T-cell (primary cell): ENCODE measurements at regions of chr13 and their contacts with region 1.

Region 1: GRCh38 chr13:48769107-48769704 is 115.5 kb downstream of the CYSLTR2 start:
- DNase-seq: peak; percentile 28 to 91 (median 73)
- ATAC-seq: peak; percentile 96 to 100 (median 99)
- H3K4me3 ChIP-seq: no peak overlapping the region
- H3K4me3 Mint-ChIP-seq: no peak overlapping the region
- H3K27ac ChIP-seq: no peak overlapping the region
- H3K27ac Mint-ChIP-seq: no peak overlapping the region
- H3K4me1 ChIP-seq: no peaks in the 10 kb centered on the region
- H3K4me1 Mint-ChIP-seq: peaks cover 4 to 6% (median 5%) of the 10 kb centered on the region in 3 donors
- H3K27me3 ChIP-seq: no peaks in the 10 kb centered on the region
- H3K27me3 Mint-ChIP-seq: peaks cover 4 to 6% of the 10 kb centered on the region in 2 donors

Region 2: GRCh38 chr13:48334534-48335127 is 434.6 kb before region 1 on chr13:
- CTCF ChIA-PET with region 1: interaction called, 5 to 29 read pairs
- POLR2A ChIA-PET with region 1: no interaction called
- DNase-seq: peak in 1 of 35 experiments; percentile 72
- ATAC-seq: peak; percentile 45 to 82 (median 64)
- H3K4me3 ChIP-seq: no peak overlapping the region
- H3K4me3 Mint-ChIP-seq: no peak overlapping the region
- H3K27ac ChIP-seq: no peak overlapping the region
- H3K27ac Mint-ChIP-seq: peak overlapping the region in 1 of 2 donors; percentile 24
- H3K4me1 ChIP-seq: no peaks in the 10 kb centered on the region
- H3K4me1 Mint-ChIP-seq: peaks cover 7 to 21% (median 17%) of the 10 kb centered on the region in 3 donors
- H3K27me3 ChIP-seq: no peaks in the 10 kb centered on the region
- H3K27me3 Mint-ChIP-seq: no peaks in the 10 kb centered on the region

Region 3: GRCh38 chr13:48595431-48596429 is 173.5 kb before region 1 on chr13:
- CTCF ChIA-PET with region 1: interaction called, 19 to 37 read pairs
- POLR2A ChIA-PET with region 1: no interaction called
- DNase-seq: peak in 34 of 35 experiments; percentile 22 to 81 (median 52)
- ATAC-seq: peak; percentile 83 to 95 (median 87)
- H3K4me3 ChIP-seq: no peak overlapping the region
- H3K4me3 Mint-ChIP-seq: no peak overlapping the region
- H3K27ac ChIP-seq: no peak overlapping the region
- H3K27ac Mint-ChIP-seq: no peak overlapping the region
- H3K4me1 ChIP-seq: no peaks in the 10 kb centered on the region
- H3K4me1 Mint-ChIP-seq: no peaks in the 10 kb centered on the region
- H3K27me3 ChIP-seq: no peaks in the 10 kb centered on the region
- H3K27me3 Mint-ChIP-seq: peaks cover 0 to 3% of the 10 kb centered on the region in 2 donors

Region 4: DNA sequence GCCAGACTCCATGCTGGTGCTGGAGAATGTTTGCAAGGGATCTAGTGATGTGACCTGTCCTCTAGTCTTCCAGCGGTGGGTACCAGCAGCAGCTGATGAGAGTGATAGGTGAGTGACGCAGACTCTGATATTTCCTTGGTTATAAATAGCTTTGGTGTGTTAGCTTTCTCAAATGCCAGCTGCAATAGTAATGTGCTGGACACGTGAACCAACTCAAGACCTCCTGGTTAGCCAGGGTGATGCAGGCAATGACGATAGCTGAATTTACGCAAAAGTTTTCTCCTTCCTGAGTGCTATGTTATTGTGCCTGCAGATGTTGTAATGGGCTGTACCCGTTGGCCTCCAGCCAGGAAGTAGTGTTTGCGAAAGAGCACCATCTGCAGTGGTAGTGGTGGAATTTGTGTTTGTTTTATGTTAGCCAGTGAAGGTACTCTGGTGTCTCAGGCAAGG is 14.0 kb after region 1 on chr13:
- CTCF ChIA-PET with region 1: interaction called, 6 to 10 read pairs
- POLR2A ChIA-PET with region 1: interaction called in 1 of 2 experiments, 3 read pairs
- DNase-seq: peak in 9 of 35 experiments; percentile 2 to 32 (median 7)
- ATAC-seq: no peak
- H3K4me3 ChIP-seq: no peak overlapping the region
- H3K4me3 Mint-ChIP-seq: no peak overlapping the region
- H3K27ac ChIP-seq: no peak overlapping the region
- H3K27ac Mint-ChIP-seq: no peak overlapping the region
- H3K4me1 ChIP-seq: no peaks in the 10 kb centered on the region
- H3K4me1 Mint-ChIP-seq: no peaks in the 10 kb centered on the region
- H3K27me3 ChIP-seq: peaks cover 0 to 7% of the 10 kb centered on the region in 2 experiments
- H3K27me3 Mint-ChIP-seq: peaks cover under 1 to 3% of the 10 kb centered on the region in 2 donors

Region 5: DNA sequence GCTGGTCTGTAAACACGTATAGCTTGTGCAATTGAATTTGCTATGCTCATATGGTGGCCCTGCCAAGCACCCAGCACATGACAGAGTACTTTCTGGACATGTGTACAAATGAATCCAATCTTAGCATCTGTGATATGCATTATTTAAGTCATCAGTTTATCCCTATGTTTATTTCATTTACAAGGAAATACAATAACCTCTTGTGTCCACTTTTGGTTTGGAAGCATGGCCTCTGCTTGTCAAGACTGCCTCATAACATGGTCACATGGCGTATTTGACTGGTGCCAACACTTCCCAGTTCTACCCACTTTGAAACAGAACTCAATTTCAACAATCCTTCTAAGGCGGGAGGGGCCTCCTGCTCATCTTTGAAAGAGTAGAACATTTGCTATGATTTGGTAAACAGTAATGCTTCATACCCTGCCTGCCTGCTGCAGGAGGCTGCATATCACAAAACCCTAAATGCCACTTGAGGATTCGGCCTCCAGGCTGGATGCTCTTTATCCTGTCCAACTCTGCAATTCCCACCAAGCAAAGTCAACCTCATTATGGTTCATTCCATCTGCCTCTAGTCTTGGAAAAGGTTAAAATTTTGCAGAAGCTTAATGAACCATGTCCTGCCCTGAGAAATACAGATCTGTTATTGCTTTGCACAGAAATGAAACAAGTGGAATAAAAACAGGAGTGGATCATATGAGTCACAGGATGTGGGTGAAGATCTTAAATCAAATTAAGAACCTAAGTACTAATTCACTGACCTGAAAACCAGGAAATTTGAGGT is 35.8 kb after region 1 on chr13:
- CTCF ChIA-PET with region 1: no interaction called
- POLR2A ChIA-PET with region 1: no interaction called
- DNase-seq: peak in 2 of 35 experiments; percentile 3 to 5
- ATAC-seq: peak; percentile 26 to 92 (median 82)
- H3K4me3 ChIP-seq: no peak overlapping the region
- H3K4me3 Mint-ChIP-seq: peak overlapping the region in 1 of 3 donors; percentile 18
- H3K27ac ChIP-seq: peak overlapping the region; percentile 42
- H3K27ac Mint-ChIP-seq: peak overlapping the region; percentile 85 to 87
- H3K4me1 ChIP-seq: peaks cover 0 to 6% of the 10 kb centered on the region in 2 experiments
- H3K4me1 Mint-ChIP-seq: peaks cover 18 to 39% (median 27%) of the 10 kb centered on the region in 3 donors
- H3K27me3 ChIP-seq: no peaks in the 10 kb centered on the region
- H3K27me3 Mint-ChIP-seq: no peaks in the 10 kb centered on the region